GM18951 (cell line): ENCODE measurements at regions of chr3 and their contacts with region 1.

Region 1: DNA sequence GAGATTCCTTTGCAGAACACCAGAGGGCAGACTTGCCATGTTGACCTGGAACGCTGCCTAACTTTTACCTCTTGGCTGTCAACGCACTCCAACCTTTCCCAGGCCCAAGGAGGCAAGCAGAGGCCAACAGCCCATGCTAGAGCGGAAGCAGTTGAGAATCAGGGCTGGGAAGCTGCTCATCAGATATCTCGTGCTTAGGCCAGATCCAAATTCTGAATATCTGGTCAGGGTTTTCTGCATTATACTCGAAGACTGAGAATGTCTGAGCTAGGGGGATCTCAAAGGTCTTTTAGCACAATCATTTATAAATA is 2.5 kb downstream of the XIRP1 start:
- POLR2A ChIP-seq: no peak

Region 2: GRCh38 chr3:39260957-39261356 is 71.0 kb after region 1 on chr3:
- in situ Hi-C with region 1: loop called (anchors 10 kb)
- POLR2A ChIP-seq: no peak

Region 3: GRCh38 chr3:39279745-39280517 is 90.0 kb after region 1 on chr3 and contains the start of gene CX3CR1:
- in situ Hi-C with region 1: loop called (anchors 5 kb)
- POLR2A ChIP-seq: no peak